ENCODE measurements at regions of chr20 and their contacts with region 1.

Region 1: GRCh38 chr20:36199345-36200257 is 36.7 kb upstream of the AAR2 start:
- DNase-seq: peak; percentile 80
- ATAC-seq: peak; percentile 81
- H3K4me3 ChIP-seq: no peak overlapping the region
- H3K4me3 Mint-ChIP-seq: no peak overlapping the region
- H3K27ac ChIP-seq: no peak overlapping the region
- H3K27ac Mint-ChIP-seq: no peak overlapping the region
- H3K4me1 ChIP-seq: peaks cover 3 to 7% of the 10 kb centered on the region in 2 donors
- H3K4me1 Mint-ChIP-seq: peaks cover 7% of the 10 kb centered on the region
- H3K27me3 ChIP-seq: peaks cover 0 to 5% (median 2%) of the 10 kb centered on the region in 4 experiments
- H3K27me3 Mint-ChIP-seq: peaks cover 26% of the 10 kb centered on the region
- CTCF ChIP-seq: peak; percentile 94

Region 2: DNA sequence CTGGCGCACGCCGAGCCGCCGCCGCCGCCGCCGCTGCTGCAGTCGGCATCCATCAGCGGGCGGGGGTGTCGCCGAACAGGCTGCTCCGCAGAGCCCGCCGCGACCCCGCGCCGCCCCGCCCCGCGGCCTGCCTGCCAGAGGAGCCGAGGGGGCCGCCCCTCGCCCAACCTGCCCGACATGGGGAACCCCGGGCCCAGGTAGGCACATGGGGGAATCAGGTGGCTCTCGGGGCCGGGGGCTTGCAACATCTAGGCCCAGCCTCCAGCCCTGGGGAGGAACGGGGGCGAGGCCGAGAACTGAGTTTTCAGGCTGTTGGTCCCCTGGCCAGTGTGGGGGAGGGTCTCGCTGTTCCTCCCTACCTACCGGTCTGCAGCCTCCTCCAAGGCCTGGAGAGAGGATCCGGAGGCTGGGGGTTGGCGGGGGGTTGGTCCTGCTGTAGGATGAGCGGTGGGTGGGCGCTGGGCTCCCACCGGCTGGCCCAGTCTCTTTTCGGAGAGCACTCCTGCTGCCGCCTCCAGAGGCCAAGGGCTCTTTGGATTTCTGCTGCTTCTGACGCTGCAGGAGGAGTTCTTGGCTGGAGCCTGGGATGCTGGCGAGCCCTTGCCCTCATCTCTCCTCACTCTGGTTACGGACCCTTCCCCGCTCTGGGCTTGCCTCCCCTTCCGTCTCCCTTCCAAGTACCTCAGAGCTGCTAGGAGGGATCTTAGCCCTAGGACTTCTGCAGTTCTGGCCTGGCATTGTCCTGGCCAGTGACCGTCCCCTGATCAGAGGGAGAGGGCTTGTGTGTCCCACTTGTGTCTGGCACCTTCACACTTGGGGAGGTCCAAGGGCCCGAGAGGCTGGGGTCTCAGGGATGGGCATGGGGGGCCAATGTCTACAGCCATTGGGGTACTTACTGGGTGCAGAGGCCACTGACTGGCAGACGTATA is 44.6 kb before region 1 on chr20 and contains the start of gene EPB41L1:
- CTCF ChIA-PET with region 1: interaction called, 32 read pairs
- POLR2A ChIA-PET with region 1: no interaction called
- intact Hi-C with region 1: loop called (anchors 1 kb)
- DNase-seq: peak; percentile 38
- ATAC-seq: no peak
- H3K4me3 ChIP-seq: peak within 1 kb of the TSS in 3 of 5 experiments; percentile 27 to 50 (median 36)
- H3K4me3 Mint-ChIP-seq: peak within 1 kb of the TSS; percentile 70
- H3K27ac ChIP-seq: no peak within 1 kb of the TSS
- H3K27ac Mint-ChIP-seq: no peak within 1 kb of the TSS
- H3K4me1 ChIP-seq: peaks cover 10 to 15% of the 10 kb centered on the region in 2 donors
- H3K4me1 Mint-ChIP-seq: peaks cover 13% of the 10 kb centered on the region
- H3K27me3 ChIP-seq: peaks cover 0 to 36% (median 16%) of the 10 kb centered on the region in 4 experiments
- H3K27me3 Mint-ChIP-seq: peaks cover 31% of the 10 kb centered on the region
- CTCF ChIP-seq: no peak
- total RNA-seq, gene EPB41L1: 1.3 and 2.3 TPM in 2 replicates

Region 3: DNA sequence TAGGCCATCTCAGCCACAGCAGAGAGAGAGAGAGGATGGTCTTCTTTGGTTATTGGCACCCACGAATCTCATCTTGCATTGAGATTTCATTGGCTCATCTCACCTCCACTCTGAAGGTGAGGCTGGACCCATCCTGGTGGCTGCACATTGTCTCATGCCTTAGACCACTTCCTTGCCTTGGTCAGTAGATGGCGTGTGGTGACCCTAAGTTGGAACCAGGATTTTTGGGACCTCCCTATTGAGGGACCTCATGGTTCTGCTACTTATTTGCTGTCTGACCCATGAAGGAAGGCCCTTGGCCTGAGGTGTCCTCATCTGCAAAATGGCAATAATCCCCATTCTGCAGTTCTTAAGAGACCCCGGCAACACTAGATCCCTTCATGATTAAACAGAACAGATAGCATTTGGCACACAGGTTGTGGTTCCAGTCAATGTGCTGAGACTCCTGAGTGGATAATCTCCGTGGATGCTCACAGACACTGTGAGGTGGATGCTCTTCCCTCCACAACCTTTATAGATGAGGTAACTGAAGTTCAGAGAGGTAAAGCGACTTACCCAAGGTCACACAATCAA is 15.2 kb after region 1 on chr20:
- CTCF ChIA-PET with region 1: interaction called, 13 read pairs
- POLR2A ChIA-PET with region 1: no interaction called
- intact Hi-C with region 1: no loop called
- DNase-seq: peak; percentile 51
- ATAC-seq: peak; percentile 56
- H3K4me3 ChIP-seq: no peak overlapping the region
- H3K4me3 Mint-ChIP-seq: no peak overlapping the region
- H3K27ac ChIP-seq: no peak overlapping the region
- H3K27ac Mint-ChIP-seq: no peak overlapping the region
- H3K4me1 ChIP-seq: no peaks in the 10 kb centered on the region
- H3K4me1 Mint-ChIP-seq: no peaks in the 10 kb centered on the region
- H3K27me3 ChIP-seq: no peaks in the 10 kb centered on the region
- H3K27me3 Mint-ChIP-seq: peaks cover 18% of the 10 kb centered on the region
- CTCF ChIP-seq: peak; percentile 56

Region 4: GRCh38 chr20:36658300-36658699 is 458.7 kb after region 1 on chr20:
- CTCF ChIA-PET with region 1: no interaction called
- POLR2A ChIA-PET with region 1: no interaction called
- intact Hi-C with region 1: no loop called
- DNase-seq: no peak
- ATAC-seq: no peak
- H3K4me3 ChIP-seq: no peak overlapping the region
- H3K4me3 Mint-ChIP-seq: no peak overlapping the region
- H3K27ac ChIP-seq: no peak overlapping the region
- H3K27ac Mint-ChIP-seq: no peak overlapping the region
- H3K4me1 ChIP-seq: no peaks in the 10 kb centered on the region
- H3K4me1 Mint-ChIP-seq: no peaks in the 10 kb centered on the region
- H3K27me3 ChIP-seq: no peaks in the 10 kb centered on the region
- H3K27me3 Mint-ChIP-seq: no peaks in the 10 kb centered on the region
- CTCF ChIP-seq: no peak

Region 5: GRCh38 chr20:36754656-36755222 is 555.1 kb after region 1 on chr20:
- CTCF ChIA-PET with region 1: interaction called, 16 read pairs
- POLR2A ChIA-PET with region 1: no interaction called
- intact Hi-C with region 1: no loop called
- DNase-seq: peak; percentile 66
- ATAC-seq: peak; percentile 65
- H3K4me3 ChIP-seq: no peak overlapping the region
- H3K4me3 Mint-ChIP-seq: no peak overlapping the region
- H3K27ac ChIP-seq: no peak overlapping the region
- H3K27ac Mint-ChIP-seq: peak overlapping the region; percentile 37
- H3K4me1 ChIP-seq: peaks cover 29 to 30% of the 10 kb centered on the region in 2 donors
- H3K4me1 Mint-ChIP-seq: peaks cover 32% of the 10 kb centered on the region
- H3K27me3 ChIP-seq: no peaks in the 10 kb centered on the region
- H3K27me3 Mint-ChIP-seq: no peaks in the 10 kb centered on the region
- CTCF ChIP-seq: peak; percentile 76

Region 6: GRCh38 chr20:36919715-36920333 is 720.2 kb after region 1 on chr20:
- CTCF ChIA-PET with region 1: interaction called, 23 read pairs
- POLR2A ChIA-PET with region 1: no interaction called
- intact Hi-C with region 1: no loop called
- DNase-seq: peak; percentile 69
- ATAC-seq: no peak
- H3K4me3 ChIP-seq: no peak overlapping the region
- H3K4me3 Mint-ChIP-seq: no peak overlapping the region
- H3K27ac ChIP-seq: no peak overlapping the region
- H3K27ac Mint-ChIP-seq: no peak overlapping the region
- H3K4me1 ChIP-seq: no peaks in the 10 kb centered on the region
- H3K4me1 Mint-ChIP-seq: peaks cover 1% of the 10 kb centered on the region
- H3K27me3 ChIP-seq: no peaks in the 10 kb centered on the region
- H3K27me3 Mint-ChIP-seq: no peaks in the 10 kb centered on the region
- CTCF ChIP-seq: peak; percentile 96

Measured in B cell (primary cell).